ENCODE measurements at regions of chr18 and their contacts with region 1.

Region 1: GRCh38 chr18:23377669-23378301 is 75.3 kb upstream of the RIOK3 start:
- DNase-seq: no peak
- H3K4me3 ChIP-seq: no peak overlapping the region
- H3K27ac ChIP-seq: no peak overlapping the region
- H3K4me1 ChIP-seq: peaks cover 2 to 6% (median 4%) of the 10 kb centered on the region in 4 experiments; a peak in 4 of 7 replicates
- H3K27me3 ChIP-seq: no peaks in the 10 kb centered on the region
- CTCF ChIP-seq: no peak
- EP300 ChIP-seq: no peak
- POLR2A ChIP-seq: no peak
- RAD21 ChIP-seq: no peak

Region 2: GRCh38 chr18:23213200-23213599 is 164.6 kb before region 1 on chr18:
- CTCF ChIA-PET with region 1: interaction called, 10 read pairs
- POLR2A ChIA-PET with region 1: no interaction called
- DNase-seq: no peak
- H3K4me3 ChIP-seq: no peak overlapping the region
- H3K27ac ChIP-seq: no peak overlapping the region
- H3K4me1 ChIP-seq: no peaks in the 10 kb centered on the region
- H3K27me3 ChIP-seq: no peaks in the 10 kb centered on the region
- CTCF ChIP-seq: no peak
- EP300 ChIP-seq: no peak
- POLR2A ChIP-seq: no peak
- RAD21 ChIP-seq: no peak

Region 3: GRCh38 chr18:23237524-23238151 is 140.1 kb before region 1 on chr18:
- CTCF ChIA-PET with region 1: interaction called, 12 read pairs
- POLR2A ChIA-PET with region 1: no interaction called
- DNase-seq: no peak
- H3K4me3 ChIP-seq: no peak overlapping the region
- H3K27ac ChIP-seq: no peak overlapping the region
- H3K4me1 ChIP-seq: peaks cover 0 to 10% (median 5%) of the 10 kb centered on the region in 4 experiments; a peak in 5 of 7 replicates
- H3K27me3 ChIP-seq: no peaks in the 10 kb centered on the region
- CTCF ChIP-seq: peak; percentile 10 to 37 (median 13)
- EP300 ChIP-seq: no peak
- POLR2A ChIP-seq: no peak
- RAD21 ChIP-seq: peak; percentile 42 to 60; a peak in 3 of 4 replicates

Region 4: GRCh38 chr18:23350188-23350587 is 27.6 kb before region 1 on chr18:
- CTCF ChIA-PET with region 1: interaction called, 11 read pairs
- POLR2A ChIA-PET with region 1: no interaction called
- DNase-seq: no peak
- H3K4me3 ChIP-seq: no peak overlapping the region
- H3K27ac ChIP-seq: no peak overlapping the region
- H3K4me1 ChIP-seq: no peaks in the 10 kb centered on the region
- H3K27me3 ChIP-seq: no peaks in the 10 kb centered on the region
- CTCF ChIP-seq: no peak
- EP300 ChIP-seq: no peak
- POLR2A ChIP-seq: no peak
- RAD21 ChIP-seq: no peak

Region 5: GRCh38 chr18:23357996-23358594 is 19.7 kb before region 1 on chr18:
- CTCF ChIA-PET with region 1: interaction called, 17 read pairs
- POLR2A ChIA-PET with region 1: no interaction called
- DNase-seq: no peak
- H3K4me3 ChIP-seq: no peak overlapping the region
- H3K27ac ChIP-seq: no peak overlapping the region
- H3K4me1 ChIP-seq: no peaks in the 10 kb centered on the region
- H3K27me3 ChIP-seq: no peaks in the 10 kb centered on the region
- CTCF ChIP-seq: no peak
- EP300 ChIP-seq: no peak
- POLR2A ChIP-seq: no peak
- RAD21 ChIP-seq: no peak

Region 6: GRCh38 chr18:23412351-23412964 is 34.7 kb after region 1 on chr18:
- CTCF ChIA-PET with region 1: interaction called, 19 read pairs
- POLR2A ChIA-PET with region 1: no interaction called
- DNase-seq: no peak
- H3K4me3 ChIP-seq: no peak overlapping the region
- H3K27ac ChIP-seq: no peak overlapping the region
- H3K4me1 ChIP-seq: no peaks in the 10 kb centered on the region
- H3K27me3 ChIP-seq: no peaks in the 10 kb centered on the region
- CTCF ChIP-seq: no peak
- EP300 ChIP-seq: no peak
- POLR2A ChIP-seq: no peak
- RAD21 ChIP-seq: no peak